ENCODE measurements at regions of chr2 and their contacts with region 1.

Region 1: DNA sequence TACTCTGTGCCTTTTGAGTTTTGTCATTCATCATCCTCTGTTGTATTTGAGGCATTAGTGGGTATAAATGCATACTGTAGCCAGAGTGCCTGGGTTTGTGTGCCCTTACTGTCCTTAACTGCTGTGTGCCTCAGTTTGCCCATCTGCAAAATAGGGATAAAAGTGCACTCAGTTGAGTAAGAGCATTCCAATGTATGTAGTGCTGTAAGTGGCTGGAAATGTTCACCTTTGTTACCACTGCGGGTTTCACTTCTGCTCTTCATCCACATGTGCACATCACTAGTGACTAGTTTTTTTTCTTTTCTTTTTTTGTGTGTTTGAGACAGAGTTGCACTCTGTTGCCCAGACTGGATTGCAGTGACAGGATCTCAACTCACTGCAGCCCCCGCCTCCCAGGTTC is 39.9 kb downstream of the PLEKHB2 start:
- DNase-seq: no peak
- H3K4me3 ChIP-seq: no peak overlapping the region
- H3K4me1 ChIP-seq: no peaks in the 10 kb centered on the region
- H3K27me3 ChIP-seq: no peaks in the 10 kb centered on the region

Region 2: DNA sequence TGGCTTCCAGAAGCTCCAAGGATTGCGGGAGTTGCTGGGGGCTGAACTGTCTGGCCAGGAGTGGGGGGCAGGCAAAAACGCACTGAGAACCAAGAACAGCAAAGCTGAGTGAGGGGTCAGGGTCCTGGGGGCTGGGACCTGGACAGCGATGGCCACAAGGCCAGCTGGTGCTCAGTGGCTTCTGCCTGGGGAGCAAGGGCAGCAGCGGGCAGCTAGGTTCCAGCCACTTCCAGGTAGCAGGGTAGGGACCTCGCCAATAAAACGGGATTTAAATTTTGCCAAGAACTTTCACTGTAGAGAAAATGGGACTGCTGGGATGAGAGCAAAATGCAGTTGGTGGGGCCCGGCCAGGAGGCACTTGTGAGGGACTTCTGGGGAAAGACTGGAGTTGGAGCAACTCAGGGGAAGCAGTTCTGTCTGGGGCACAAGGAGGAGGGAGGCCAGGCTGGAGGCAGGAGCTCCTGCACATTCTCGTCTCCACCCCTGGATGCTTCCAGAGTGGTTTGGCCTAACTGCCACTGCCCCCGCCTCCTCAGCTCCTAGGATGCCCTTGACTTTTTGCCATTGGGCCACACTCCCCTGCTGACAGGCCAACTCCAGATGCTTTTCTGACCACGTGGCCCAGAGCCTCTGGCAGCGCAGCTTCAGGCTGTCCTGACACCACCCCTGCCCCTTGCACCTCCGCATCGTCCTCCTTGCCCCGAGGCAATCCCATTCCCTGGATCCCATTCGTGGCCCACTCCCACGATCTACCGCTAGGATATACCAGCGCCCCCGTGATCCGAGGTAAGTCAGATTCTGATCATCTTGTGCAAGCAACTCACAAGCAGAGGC is 377.1 kb after region 1 on chr2:
- in situ Hi-C with region 1: loop called (anchors 25 kb)
- DNase-seq: no peak
- H3K4me3 ChIP-seq: no peak overlapping the region
- H3K4me1 ChIP-seq: no peaks in the 10 kb centered on the region; the same call in 1 of the 2 replicates
- H3K27me3 ChIP-seq: no peaks in the 10 kb centered on the region

Region 3: GRCh38 chr2:131673392-131674173 is 528.5 kb after region 1 on chr2:
- in situ Hi-C with region 1: loop called (anchors 25 kb)
- DNase-seq: peak; percentile 44 to 85
- H3K4me3 ChIP-seq: peak overlapping the region; percentile 22
- H3K4me1 ChIP-seq: no peaks in the 10 kb centered on the region; the same call in 1 of the 2 replicates
- H3K27me3 ChIP-seq: peaks cover 9% of the 10 kb centered on the region